GM12878 (cell line): ENCODE measurements at regions of chr3 and their contacts with region 1.

Region 1: GRCh38 chr3:122484985-122485384 is 29.8 kb downstream of the KPNA1 start:
- DNase-seq: no peak
- ATAC-seq: no peak
- H3K4me3 ChIP-seq: no peak overlapping the region
- H3K27ac ChIP-seq: no peak overlapping the region
- H3K4me1 ChIP-seq: peaks cover 9% of the 10 kb centered on the region
- H3K27me3 ChIP-seq: no peaks in the 10 kb centered on the region
- CTCF ChIP-seq: no peak
- EP300 ChIP-seq: no peak
- POLR2A ChIP-seq: no peak
- RAD21 ChIP-seq: no peak

Region 2: GRCh38 chr3:122468896-122469533 is 16.0 kb before region 1 on chr3:
- CTCF ChIA-PET with region 1: interaction called, 4 read pairs
- POLR2A ChIA-PET with region 1: interaction called, 3 read pairs
- RAD21 ChIA-PET with region 1: interaction called, 5 read pairs
- SMC1A ChIA-PET with region 1: interaction called, 61 read pairs
- in situ Hi-C with region 1: no loop called
- intact Hi-C with region 1: no loop called
- DNase-seq: peak; percentile 30
- ATAC-seq: peak; percentile 88
- H3K4me3 ChIP-seq: no peak overlapping the region
- H3K27ac ChIP-seq: peak overlapping the region; percentile 53
- H3K4me1 ChIP-seq: peaks cover 16% of the 10 kb centered on the region
- H3K27me3 ChIP-seq: no peaks in the 10 kb centered on the region
- CTCF ChIP-seq: no peak
- EP300 ChIP-seq: no peak; a peak in 1 of 4 replicates
- POLR2A ChIP-seq: no peak
- RAD21 ChIP-seq: no peak

Region 3: DNA sequence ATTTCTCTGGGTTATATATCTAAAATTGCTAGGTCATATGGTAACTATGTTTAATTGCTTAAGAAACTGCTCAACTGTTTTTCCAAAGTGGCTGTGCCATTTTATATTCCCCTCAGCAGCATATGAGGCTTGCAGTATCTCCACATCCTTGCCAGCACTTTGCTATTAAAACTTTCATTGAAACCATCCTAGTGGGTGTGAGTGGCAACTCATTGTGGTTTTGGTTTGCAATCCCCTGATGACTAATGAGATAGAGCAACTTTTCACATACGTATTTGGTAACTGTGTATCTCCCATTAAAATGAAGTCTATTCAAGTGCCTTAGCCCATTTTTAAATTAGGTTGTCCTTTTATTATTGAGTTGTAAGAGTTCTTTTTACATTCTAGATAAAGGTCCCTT is 12.4 kb after region 1 on chr3:
- CTCF ChIA-PET with region 1: interaction called, 7 read pairs
- POLR2A ChIA-PET with region 1: interaction called, 6 read pairs
- RAD21 ChIA-PET with region 1: no interaction called
- SMC1A ChIA-PET with region 1: interaction called, 21 read pairs
- in situ Hi-C with region 1: no loop called
- intact Hi-C with region 1: loop called (anchors 2 kb)
- DNase-seq: peak; percentile 72
- ATAC-seq: peak; percentile 97
- H3K4me3 ChIP-seq: no peak overlapping the region
- H3K27ac ChIP-seq: peak overlapping the region; percentile 64; the same call in 1 of the 2 replicates
- H3K4me1 ChIP-seq: peaks cover 14% of the 10 kb centered on the region
- H3K27me3 ChIP-seq: no peaks in the 10 kb centered on the region
- CTCF ChIP-seq: no peak
- EP300 ChIP-seq: peak; percentile 24 to 27; a peak in 1 of 4 replicates
- POLR2A ChIP-seq: no peak
- RAD21 ChIP-seq: no peak

Region 4: DNA sequence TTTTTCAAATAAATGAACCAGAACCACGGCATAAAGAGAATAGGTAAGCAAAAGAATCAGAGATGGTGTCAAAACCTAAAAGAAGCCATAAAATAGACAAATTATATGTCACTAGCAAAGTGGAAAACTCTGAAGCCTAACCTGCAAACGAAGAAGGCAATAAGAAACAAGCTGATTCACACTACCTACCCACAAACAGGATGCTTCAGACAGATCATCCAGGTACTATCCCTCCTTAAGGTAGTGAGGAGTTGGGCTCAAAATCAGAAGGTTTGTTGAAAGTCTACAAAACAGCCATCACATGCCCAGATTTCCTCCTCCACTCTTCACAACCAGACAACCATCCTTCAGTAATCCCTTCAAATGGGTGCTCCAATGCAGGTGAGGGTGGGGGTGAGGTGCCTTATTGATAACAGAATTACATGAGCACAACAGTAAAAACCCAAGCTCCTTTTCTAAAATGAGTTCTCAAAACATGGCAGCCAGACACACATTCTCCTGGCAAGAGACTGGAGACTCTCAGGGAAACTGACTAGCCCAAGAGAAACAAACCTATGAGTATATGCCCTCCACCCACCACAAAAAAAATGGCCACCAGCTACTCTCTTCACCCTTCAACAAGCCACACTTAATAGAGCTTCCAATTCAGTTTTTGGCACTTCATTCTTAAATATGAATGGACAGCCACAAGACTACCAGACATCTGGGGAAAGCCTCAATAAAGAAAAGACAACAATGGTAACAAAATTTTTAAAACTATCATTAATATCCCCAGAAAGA is 23.3 kb after region 1 on chr3:
- CTCF ChIA-PET with region 1: interaction called, 4 read pairs
- POLR2A ChIA-PET with region 1: interaction called, 5 read pairs
- RAD21 ChIA-PET with region 1: interaction called, 13 read pairs
- SMC1A ChIA-PET with region 1: interaction called, 59 read pairs
- in situ Hi-C with region 1: no loop called
- intact Hi-C with region 1: no loop called
- DNase-seq: no peak
- ATAC-seq: peak; percentile 61
- H3K4me3 ChIP-seq: peak overlapping the region; percentile 28
- H3K27ac ChIP-seq: peak overlapping the region; percentile 2
- H3K4me1 ChIP-seq: peaks cover 6% of the 10 kb centered on the region; the same call in 1 of the 2 replicates
- H3K27me3 ChIP-seq: no peaks in the 10 kb centered on the region
- CTCF ChIP-seq: no peak
- EP300 ChIP-seq: no peak
- POLR2A ChIP-seq: no peak
- RAD21 ChIP-seq: no peak

Region 5: DNA sequence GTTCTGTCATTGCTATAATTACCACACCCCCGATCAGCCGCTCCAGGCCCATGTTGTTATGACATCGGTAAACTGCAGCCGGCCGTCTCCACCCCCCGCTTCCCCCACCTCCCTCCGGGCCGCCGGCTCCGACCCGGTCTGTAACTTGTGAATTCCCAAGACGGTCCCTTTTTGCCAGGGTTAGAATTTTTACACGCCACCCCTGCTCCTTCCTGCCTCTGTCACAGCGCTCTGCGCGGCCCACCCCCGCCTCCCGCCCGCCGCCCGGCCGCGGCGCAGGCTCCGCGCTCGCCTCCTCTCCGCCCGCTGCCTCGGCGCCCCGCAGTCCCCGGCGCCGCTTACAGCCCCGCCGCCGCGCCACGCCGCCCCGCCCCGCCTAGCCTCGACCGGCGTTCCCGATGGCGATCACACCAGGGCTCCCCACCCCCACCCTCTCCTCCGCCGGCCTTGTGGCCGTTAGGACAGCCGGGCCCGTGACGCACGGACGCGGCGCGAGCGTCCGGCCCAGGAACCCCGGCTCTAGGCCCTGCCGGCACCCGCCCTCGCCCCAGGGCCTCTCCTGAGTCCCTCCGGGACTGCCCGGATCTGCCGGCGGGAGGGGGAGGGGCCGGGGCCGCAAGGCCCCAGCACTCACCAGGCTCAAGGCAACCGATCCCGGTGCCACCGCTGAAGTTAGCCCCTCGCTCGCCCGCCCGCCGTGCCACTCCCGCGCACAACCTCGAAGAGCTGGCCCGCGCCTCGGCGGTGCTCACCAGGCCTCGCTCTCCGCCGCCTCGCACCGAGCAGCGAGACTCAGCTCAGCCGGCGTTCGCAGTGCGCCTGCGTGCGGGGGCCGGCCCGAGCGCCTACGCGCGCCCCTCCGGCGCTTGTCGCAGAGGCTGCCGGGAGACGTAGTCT is 29.4 kb after region 1 on chr3 and contains the start of gene KPNA1:
- CTCF ChIA-PET with region 1: interaction called, 4 read pairs
- POLR2A ChIA-PET with region 1: interaction called, 3 read pairs
- RAD21 ChIA-PET with region 1: interaction called, 3 read pairs
- SMC1A ChIA-PET with region 1: interaction called, 59 read pairs
- in situ Hi-C with region 1: no loop called
- intact Hi-C with region 1: no loop called
- DNase-seq: peak; percentile 65
- ATAC-seq: peak; percentile 94
- H3K4me3 ChIP-seq: peak within 1 kb of the TSS; percentile 82
- H3K27ac ChIP-seq: peak within 1 kb of the TSS; percentile 71
- H3K4me1 ChIP-seq: no peaks in the 10 kb centered on the region; the same call in 1 of the 2 replicates
- H3K27me3 ChIP-seq: no peaks in the 10 kb centered on the region
- CTCF ChIP-seq: no peak
- EP300 ChIP-seq: 0 out of 4 replicates have a peak, but pooled peaks of 1 of the 2 experiments have one; percentile 6
- POLR2A ChIP-seq: peak; percentile 99
- RAD21 ChIP-seq: no peak
- polyA plus RNA-seq, gene KPNA1: 8.5 to 8.8 TPM

Region 6: DNA sequence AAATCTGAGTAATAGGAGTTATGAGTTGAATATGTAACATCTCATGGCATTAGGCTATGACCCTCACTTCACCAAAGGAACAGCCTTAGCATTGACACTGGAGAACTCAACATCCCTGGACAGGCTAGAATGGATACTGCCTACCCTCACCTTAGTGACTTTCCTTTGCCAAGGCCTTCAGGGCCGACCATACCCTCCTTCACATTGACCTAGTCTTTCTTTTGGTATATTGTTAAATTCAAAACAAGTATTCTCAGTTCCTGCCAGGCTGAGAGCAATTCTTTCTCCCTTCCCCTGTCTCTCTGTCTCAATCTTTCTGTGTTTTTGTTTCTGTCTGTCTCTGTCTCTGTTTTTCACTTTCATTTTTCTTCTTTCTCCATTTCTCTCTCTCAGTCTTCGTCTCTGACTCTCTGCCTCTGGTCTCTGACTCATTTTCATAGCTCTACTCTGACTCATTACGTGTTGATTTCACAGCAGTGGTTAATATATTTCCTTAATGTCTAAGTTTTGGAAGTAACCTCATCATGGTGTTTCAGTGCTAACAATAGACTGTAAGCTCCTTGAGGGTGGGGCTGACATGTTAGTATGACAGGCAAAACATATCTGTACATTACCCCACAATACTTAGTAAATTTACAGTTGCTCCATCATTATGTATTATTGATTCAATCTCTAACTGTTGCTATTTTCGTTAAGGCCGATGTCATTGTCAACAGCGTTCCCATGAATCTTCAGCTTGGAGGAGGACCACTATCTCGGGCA is 125.0 kb after region 1 on chr3:
- CTCF ChIA-PET with region 1: no interaction called
- POLR2A ChIA-PET with region 1: no interaction called
- RAD21 ChIA-PET with region 1: no interaction called
- SMC1A ChIA-PET with region 1: no interaction called
- in situ Hi-C with region 1: no loop called
- intact Hi-C with region 1: no loop called
- DNase-seq: peak; percentile 98
- ATAC-seq: peak; percentile 96
- H3K4me3 ChIP-seq: no peak overlapping the region
- H3K27ac ChIP-seq: peak overlapping the region; percentile 75
- H3K4me1 ChIP-seq: peaks cover 22% of the 10 kb centered on the region
- H3K27me3 ChIP-seq: no peaks in the 10 kb centered on the region
- CTCF ChIP-seq: no peak
- EP300 ChIP-seq: peak; percentile 91 to 99
- POLR2A ChIP-seq: no peak
- RAD21 ChIP-seq: no peak; the same call in 1 of the 2 replicates